GM12878 (cell line): ENCODE measurements at regions of chr1 and their contacts with region 1.

Region 1: DNA sequence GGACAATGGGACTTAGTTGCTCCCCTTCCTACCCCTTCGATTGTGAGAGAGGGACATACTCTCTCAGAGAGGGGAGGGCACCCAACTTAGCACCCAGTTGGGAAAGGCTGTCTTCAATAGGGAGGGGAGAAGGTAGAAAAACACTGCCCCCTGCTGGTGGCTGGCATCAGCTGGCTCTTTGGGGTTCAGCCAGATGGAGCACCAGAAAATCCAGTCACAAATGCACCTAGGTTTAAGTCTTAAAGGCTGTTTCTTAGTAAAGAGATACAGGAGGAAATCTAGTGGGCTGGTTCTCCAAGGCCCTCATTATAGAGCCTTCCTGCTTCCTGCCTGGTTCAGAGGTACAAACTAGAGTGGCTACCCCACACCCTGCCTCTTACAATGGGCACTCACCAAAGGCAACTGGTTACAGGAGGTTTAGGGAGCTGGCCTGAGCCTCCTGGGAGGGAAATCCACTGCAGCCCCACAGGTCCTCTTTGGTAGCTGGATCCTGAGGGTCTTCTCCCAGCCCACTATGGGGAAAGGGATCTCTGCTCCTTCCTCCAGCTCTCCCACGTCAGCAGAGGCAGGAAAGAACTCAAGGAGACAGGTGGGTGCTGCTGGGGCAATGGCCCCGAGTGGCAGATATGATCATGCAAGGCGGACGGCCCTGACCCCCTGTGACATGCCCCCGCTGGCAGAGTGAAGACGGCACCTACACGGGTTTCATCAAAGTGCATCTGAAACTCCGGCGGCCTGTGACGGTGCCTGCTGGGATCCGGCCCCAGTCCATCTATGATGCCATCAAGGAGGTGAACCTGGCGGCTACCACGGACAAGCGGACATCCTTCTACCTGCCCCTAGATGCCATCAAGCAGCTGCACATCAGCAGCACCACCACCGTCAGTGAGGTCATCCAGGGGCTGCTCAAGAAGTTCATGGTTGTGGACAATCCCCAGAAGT is 28.3 kb downstream of the EIF2D start:
- DNase-seq: no peak
- ATAC-seq: peak; percentile 67
- H3K4me3 ChIP-seq: no peak overlapping the region
- H3K27ac ChIP-seq: no peak overlapping the region
- H3K4me1 ChIP-seq: peaks cover 28% of the 10 kb centered on the region
- H3K27me3 ChIP-seq: no peaks in the 10 kb centered on the region
- CTCF ChIP-seq: peak; percentile 82 to 92 (median 90)
- EP300 ChIP-seq: no peak
- POLR2A ChIP-seq: no peak
- RAD21 ChIP-seq: peak; percentile 92

Region 2: GRCh38 chr1:206469933-206470691 is 113.9 kb before region 1 on chr1 and contains the start of gene IKBKE:
- CTCF ChIA-PET with region 1: interaction called, 6 read pairs
- POLR2A ChIA-PET with region 1: interaction called, 6 read pairs
- RAD21 ChIA-PET with region 1: interaction called, 10 read pairs
- SMC1A ChIA-PET with region 1: interaction called, 6 read pairs
- in situ Hi-C with region 1: no loop called
- intact Hi-C with region 1: no loop called
- DNase-seq: no peak
- ATAC-seq: peak; percentile 73
- H3K4me3 ChIP-seq: peak within 1 kb of the TSS; percentile 94
- H3K27ac ChIP-seq: peak within 1 kb of the TSS; percentile 88
- H3K4me1 ChIP-seq: peaks cover 66% of the 10 kb centered on the region
- H3K27me3 ChIP-seq: no peaks in the 10 kb centered on the region
- CTCF ChIP-seq: peak; percentile 7 to 22 (median 17); a peak in 1 of 6 replicates
- EP300 ChIP-seq: no peak
- POLR2A ChIP-seq: peak; percentile 68
- RAD21 ChIP-seq: no peak
- polyA plus RNA-seq, gene IKBKE: 12.8 to 19.2 TPM

Region 3: GRCh38 chr1:206489980-206490770 is 93.8 kb before region 1 on chr1:
- CTCF ChIA-PET with region 1: interaction called, 74 read pairs
- POLR2A ChIA-PET with region 1: interaction called, 4 read pairs
- RAD21 ChIA-PET with region 1: interaction called, 26 read pairs
- SMC1A ChIA-PET with region 1: interaction called, 146 read pairs
- in situ Hi-C with region 1: loop called (anchors 5 kb)
- intact Hi-C with region 1: loop called (anchors 1 kb)
- DNase-seq: no peak
- ATAC-seq: peak; percentile 99
- H3K4me3 ChIP-seq: no peak overlapping the region
- H3K27ac ChIP-seq: no peak overlapping the region
- H3K4me1 ChIP-seq: peaks cover 5% of the 10 kb centered on the region
- H3K27me3 ChIP-seq: no peaks in the 10 kb centered on the region
- CTCF ChIP-seq: peak; percentile 91 to 97 (median 96)
- EP300 ChIP-seq: no peak
- POLR2A ChIP-seq: no peak
- RAD21 ChIP-seq: peak; percentile 97

Region 4: GRCh38 chr1:206507284-206508129 is 76.5 kb before region 1 on chr1 and contains the start of gene RASSF5:
- CTCF ChIA-PET with region 1: interaction called, 29 read pairs
- POLR2A ChIA-PET with region 1: interaction called, 4 read pairs
- RAD21 ChIA-PET with region 1: interaction called, 29 read pairs
- SMC1A ChIA-PET with region 1: interaction called, 14 read pairs
- in situ Hi-C with region 1: no loop called
- intact Hi-C with region 1: no loop called
- DNase-seq: no peak
- ATAC-seq: peak; percentile 78
- H3K4me3 ChIP-seq: peak within 1 kb of the TSS; percentile 72
- H3K27ac ChIP-seq: peak within 1 kb of the TSS; percentile 29; the same call in 1 of the 2 replicates
- H3K4me1 ChIP-seq: peaks cover 41% of the 10 kb centered on the region
- H3K27me3 ChIP-seq: no peaks in the 10 kb centered on the region
- CTCF ChIP-seq: no peak
- EP300 ChIP-seq: 0 out of 4 replicates have a peak, but pooled peaks of 1 of the 2 experiments have one; percentile 21
- POLR2A ChIP-seq: peak; percentile 83
- RAD21 ChIP-seq: no peak
- polyA plus RNA-seq, gene RASSF5: 14.0 to 25.4 TPM

Region 5: DNA sequence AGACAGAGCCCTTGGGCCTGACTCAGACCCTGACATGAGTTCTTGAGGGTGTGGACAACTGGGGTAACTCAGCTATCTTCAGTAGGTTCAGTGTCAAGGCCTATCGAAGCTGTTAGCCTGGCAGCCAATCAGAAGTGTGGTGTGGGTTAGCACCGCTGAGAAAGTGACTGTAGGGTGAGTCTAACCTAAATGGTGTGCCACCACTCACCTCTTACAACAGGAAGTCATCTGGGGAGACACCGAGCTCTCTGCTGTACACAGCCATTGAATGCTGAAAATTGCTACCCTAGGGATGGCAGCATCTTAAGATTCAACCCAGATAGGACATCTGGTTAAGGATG is 32.0 kb before region 1 on chr1:
- CTCF ChIA-PET with region 1: interaction called, 440 read pairs
- POLR2A ChIA-PET with region 1: interaction called, 66 read pairs
- RAD21 ChIA-PET with region 1: interaction called, 85 read pairs
- SMC1A ChIA-PET with region 1: interaction called, 476 read pairs
- in situ Hi-C with region 1: loop called (anchors 5 kb)
- intact Hi-C with region 1: loop called (anchors 2 kb)
- DNase-seq: no peak
- ATAC-seq: no peak
- H3K4me3 ChIP-seq: no peak overlapping the region
- H3K27ac ChIP-seq: no peak overlapping the region
- H3K4me1 ChIP-seq: peaks cover 24% of the 10 kb centered on the region
- H3K27me3 ChIP-seq: no peaks in the 10 kb centered on the region
- CTCF ChIP-seq: no peak
- EP300 ChIP-seq: no peak
- POLR2A ChIP-seq: no peak
- RAD21 ChIP-seq: no peak

Region 6: DNA sequence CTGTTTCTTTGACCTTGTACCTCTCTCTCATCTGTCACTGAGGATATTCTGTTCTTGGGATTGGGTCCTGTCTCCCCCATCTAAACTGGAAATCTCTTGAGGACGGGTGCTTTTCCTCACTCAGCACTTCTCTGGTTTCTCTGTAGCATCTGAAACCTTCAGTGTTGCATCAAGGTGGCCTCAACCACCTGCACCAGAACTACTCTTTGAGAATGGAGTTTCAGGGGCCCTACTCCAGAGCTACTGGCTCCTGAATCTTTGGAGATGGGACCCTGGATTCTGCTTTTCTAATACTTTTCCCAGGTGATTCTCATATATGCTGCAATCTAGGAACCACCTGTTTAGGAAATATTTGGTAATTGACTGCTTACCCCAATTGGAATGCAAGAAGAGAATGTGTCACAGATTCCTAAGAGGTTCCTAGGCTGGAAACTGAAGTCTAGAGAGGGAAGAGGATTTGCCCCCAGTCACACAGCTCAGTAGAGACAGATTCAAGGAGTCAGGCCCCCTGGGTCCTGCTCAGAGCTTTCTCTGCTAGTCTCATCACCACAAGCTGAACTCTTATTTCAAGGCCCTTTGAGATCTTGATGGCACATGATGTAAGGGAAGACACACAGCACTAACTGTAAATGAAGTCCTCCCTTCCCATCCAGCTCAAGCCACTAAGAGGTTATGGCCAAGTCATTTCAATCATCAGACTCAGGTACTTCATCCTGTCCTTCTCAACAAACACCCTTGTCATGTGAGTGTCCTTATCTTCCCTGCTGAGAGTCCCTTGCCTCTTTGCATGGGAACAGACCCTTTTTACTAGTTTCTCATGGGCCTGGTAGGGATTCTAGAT is 20.4 kb before region 1 on chr1:
- CTCF ChIA-PET with region 1: interaction called, 330 read pairs
- POLR2A ChIA-PET with region 1: interaction called, 117 read pairs
- RAD21 ChIA-PET with region 1: interaction called, 57 read pairs
- SMC1A ChIA-PET with region 1: interaction called, 476 read pairs
- in situ Hi-C with region 1: no loop called
- intact Hi-C with region 1: loop called (anchors 1 kb)
- DNase-seq: no peak
- ATAC-seq: peak; percentile 9
- H3K4me3 ChIP-seq: peak overlapping the region; percentile 56
- H3K27ac ChIP-seq: peak overlapping the region; percentile 81
- H3K4me1 ChIP-seq: peaks cover 61% of the 10 kb centered on the region
- H3K27me3 ChIP-seq: no peaks in the 10 kb centered on the region
- CTCF ChIP-seq: no peak
- EP300 ChIP-seq: no peak
- POLR2A ChIP-seq: no peak
- RAD21 ChIP-seq: no peak

Region 7: GRCh38 chr1:207128336-207128921 is 544.5 kb after region 1 on chr1:
- CTCF ChIA-PET with region 1: no interaction called
- POLR2A ChIA-PET with region 1: no interaction called
- RAD21 ChIA-PET with region 1: no interaction called
- SMC1A ChIA-PET with region 1: no interaction called
- in situ Hi-C with region 1: no loop called
- intact Hi-C with region 1: no loop called
- DNase-seq: no peak
- ATAC-seq: no peak
- H3K4me3 ChIP-seq: no peak overlapping the region
- H3K27ac ChIP-seq: no peak overlapping the region
- H3K4me1 ChIP-seq: no peaks in the 10 kb centered on the region
- H3K27me3 ChIP-seq: no peaks in the 10 kb centered on the region
- CTCF ChIP-seq: no peak
- EP300 ChIP-seq: no peak
- POLR2A ChIP-seq: no peak
- RAD21 ChIP-seq: no peak